ENCODE measurements at regions of chr14 and their contacts with region 1.

Region 1: GRCh38 chr14:102071283-102071998 is 15.4 kb downstream of the HSP90AA1 start:
- DNase-seq: peak; percentile 20
- H3K4me3 ChIP-seq: no peak overlapping the region
- H3K27ac ChIP-seq: no peak overlapping the region
- H3K27me3 ChIP-seq: no peaks in the 10 kb centered on the region
- CTCF ChIP-seq: no peak

Region 2: DNA sequence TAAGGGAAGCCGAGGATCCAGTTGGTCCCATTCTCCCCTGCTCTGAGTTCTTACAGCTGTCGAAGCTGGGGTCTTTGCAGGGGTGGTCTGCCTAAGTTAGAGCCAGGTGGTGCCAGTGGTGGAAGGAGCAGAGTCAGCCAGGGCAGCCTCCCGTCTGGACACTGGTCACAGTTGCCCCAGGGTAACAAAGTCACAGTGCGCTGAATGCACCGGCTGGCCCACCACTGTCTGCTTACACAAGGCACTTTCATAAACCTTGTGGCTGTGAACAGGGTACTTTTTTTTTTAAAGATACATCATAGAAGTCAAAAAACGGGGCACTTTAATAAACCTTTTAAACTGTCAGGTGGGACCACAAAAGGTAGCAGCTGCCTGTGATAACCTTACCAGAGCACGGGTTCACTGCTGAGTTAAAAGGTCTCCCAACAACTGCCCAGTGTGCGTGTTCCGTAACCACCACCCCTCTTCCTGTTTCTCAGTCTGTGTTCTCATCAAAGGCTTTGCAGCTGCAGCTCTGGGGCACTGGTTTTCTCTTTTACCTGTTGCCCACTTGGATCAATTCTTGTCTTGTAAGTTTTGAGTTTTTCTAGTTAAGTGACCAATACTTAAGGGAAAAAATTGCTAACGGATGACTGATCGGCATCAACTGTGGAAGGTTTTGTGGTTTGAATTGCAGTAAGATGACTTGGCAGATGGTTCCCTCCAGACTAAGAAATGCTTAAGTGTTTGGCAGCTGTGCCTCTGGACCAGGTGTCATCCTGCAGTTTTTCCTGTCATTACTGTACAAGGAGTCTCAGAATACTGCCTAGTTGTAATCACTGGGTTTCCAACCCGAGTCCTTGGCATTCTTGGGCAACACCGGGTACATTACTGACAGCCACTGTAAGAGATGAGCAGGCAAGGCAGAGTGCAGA is 51.1 kb before region 1 on chr14:
- CTCF ChIA-PET with region 1: no interaction called
- POLR2A ChIA-PET with region 1: no interaction called
- DNase-seq: peak; percentile 67
- H3K4me3 ChIP-seq: no peak overlapping the region
- H3K27ac ChIP-seq: peak overlapping the region; percentile 61
- H3K27me3 ChIP-seq: no peaks in the 10 kb centered on the region
- CTCF ChIP-seq: no peak

Region 3: GRCh38 chr14:102086972-102087761 is 15.7 kb after region 1 on chr14 and contains the start of gene HSP90AA1:
- CTCF ChIA-PET with region 1: interaction called, 10 read pairs
- POLR2A ChIA-PET with region 1: no interaction called
- DNase-seq: peak; percentile 62
- H3K4me3 ChIP-seq: peak within 1 kb of the TSS; percentile 83
- H3K27ac ChIP-seq: peak within 1 kb of the TSS; percentile 81
- H3K27me3 ChIP-seq: no peaks in the 10 kb centered on the region
- CTCF ChIP-seq: peak; percentile 28
- polyA plus RNA-seq, gene HSP90AA1: 543 and 822 TPM in 2 replicates